Calu3 (cell line): ENCODE measurements at regions of chr1 and their contacts with region 1.

Region 1: GRCh38 chr1:64823691-64824476 is 79.0 kb downstream of the RAVER2 start:
- DNase-seq: peak; percentile 65
- H3K4me3 Mint-ChIP-seq: no peak overlapping the region
- H3K27ac Mint-ChIP-seq: no peak overlapping the region
- H3K4me1 Mint-ChIP-seq: no peaks in the 10 kb centered on the region
- H3K27me3 Mint-ChIP-seq: no peaks in the 10 kb centered on the region
- CTCF ChIP-seq: no peak

Region 2: GRCh38 chr1:64553281-64553680 is 270.6 kb before region 1 on chr1:
- CTCF ChIA-PET with region 1: no interaction called
- intact Hi-C with region 1: loop called (anchors 10 kb)
- DNase-seq: no peak
- H3K4me3 Mint-ChIP-seq: no peak overlapping the region
- H3K27ac Mint-ChIP-seq: no peak overlapping the region
- H3K4me1 Mint-ChIP-seq: no peaks in the 10 kb centered on the region
- H3K27me3 Mint-ChIP-seq: no peaks in the 10 kb centered on the region
- CTCF ChIP-seq: no peak

Region 3: DNA sequence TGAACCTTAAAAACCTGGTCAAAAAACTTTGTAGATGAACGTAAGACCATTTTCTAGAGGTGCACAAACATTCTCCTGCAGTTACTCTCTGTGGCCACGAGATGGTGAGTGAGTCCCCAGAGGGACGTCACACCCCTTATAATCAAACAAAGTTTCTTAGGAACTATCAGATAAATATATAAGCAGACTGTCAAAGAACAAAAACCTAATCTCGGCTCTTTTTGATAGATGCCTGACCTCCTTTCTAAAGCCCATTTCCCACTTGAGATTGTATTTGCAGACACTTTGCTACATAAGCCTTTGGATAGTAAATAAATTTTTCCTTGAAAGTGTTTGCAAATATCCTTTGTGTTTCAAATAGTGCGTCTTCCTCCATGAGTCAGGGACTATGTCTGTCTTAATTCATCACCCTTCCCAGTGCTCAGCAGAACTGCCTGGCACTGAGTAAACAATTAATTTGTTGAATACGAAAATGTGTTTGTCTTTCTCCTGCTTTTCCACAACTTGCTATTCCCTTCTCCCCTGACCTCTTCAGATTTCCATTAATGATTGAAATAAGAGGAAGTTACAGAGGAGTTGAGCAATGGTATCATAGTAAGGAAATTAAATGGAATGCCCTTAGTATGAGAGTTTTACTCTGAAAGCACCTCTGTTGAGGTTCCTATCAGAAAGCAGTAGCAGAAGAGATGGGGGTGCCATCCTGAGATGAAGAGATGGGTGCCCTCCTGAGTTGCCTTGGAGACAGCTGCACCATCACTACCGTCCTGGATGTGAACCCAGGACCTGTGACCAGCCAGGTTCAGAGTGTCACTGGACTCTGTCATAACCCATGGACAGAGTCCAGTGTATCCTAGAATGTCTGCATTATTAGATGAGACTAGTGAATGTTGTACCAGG is 136.8 kb before region 1 on chr1:
- CTCF ChIA-PET with region 1: no interaction called
- intact Hi-C with region 1: loop called (anchors 1 kb)
- DNase-seq: peak; percentile 54
- H3K4me3 Mint-ChIP-seq: peak overlapping the region; percentile 44
- H3K27ac Mint-ChIP-seq: peak overlapping the region; percentile 88
- H3K4me1 Mint-ChIP-seq: peaks cover 40% of the 10 kb centered on the region
- H3K27me3 Mint-ChIP-seq: no peaks in the 10 kb centered on the region
- CTCF ChIP-seq: peak; percentile 76

Region 4: DNA sequence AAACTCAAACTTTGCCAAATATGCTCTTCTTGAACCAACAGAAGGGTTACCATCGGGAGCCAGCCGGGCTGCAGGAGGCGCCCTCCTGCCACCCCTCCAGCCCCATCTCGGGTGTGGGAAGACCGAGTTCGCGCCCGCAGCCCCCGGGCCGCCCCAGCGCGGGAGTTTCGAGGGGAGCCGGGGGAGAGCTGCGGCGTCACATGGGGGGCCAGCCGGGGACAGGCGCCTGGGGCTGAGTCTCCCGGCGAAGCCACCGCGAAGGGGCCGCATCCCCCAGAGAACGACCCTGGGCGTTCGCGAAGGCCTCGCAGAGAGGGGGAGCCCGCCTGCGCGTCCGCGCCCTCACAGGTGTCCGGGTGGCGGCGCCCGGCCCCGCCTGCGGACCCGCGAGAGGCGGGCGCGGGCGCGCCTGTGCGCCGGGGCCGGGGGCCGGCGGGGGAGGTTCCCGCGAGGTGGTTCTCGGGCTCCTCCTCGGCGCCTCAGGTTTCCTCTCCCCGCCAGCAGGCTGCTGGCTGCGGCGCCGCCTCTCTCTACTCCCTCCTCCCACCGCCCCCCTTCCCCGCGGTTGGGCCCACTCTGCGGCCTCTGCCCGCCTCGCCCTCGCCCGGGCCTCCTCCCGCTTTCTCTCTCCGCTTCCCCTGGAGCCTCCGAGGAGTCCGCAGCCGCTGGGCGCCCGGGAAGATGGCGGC is 79.2 kb before region 1 on chr1 and contains the start of gene RAVER2:
- CTCF ChIA-PET with region 1: no interaction called
- intact Hi-C with region 1: loop called (anchors 1 kb)
- DNase-seq: peak; percentile 80
- H3K4me3 Mint-ChIP-seq: peak within 1 kb of the TSS; percentile 94
- H3K27ac Mint-ChIP-seq: peak within 1 kb of the TSS; percentile 49
- H3K4me1 Mint-ChIP-seq: peaks cover 23% of the 10 kb centered on the region
- H3K27me3 Mint-ChIP-seq: no peaks in the 10 kb centered on the region
- CTCF ChIP-seq: peak; percentile 56
- total RNA-seq, gene RAVER2: 10.3 and 12.8 TPM in 2 replicates

Region 5: DNA sequence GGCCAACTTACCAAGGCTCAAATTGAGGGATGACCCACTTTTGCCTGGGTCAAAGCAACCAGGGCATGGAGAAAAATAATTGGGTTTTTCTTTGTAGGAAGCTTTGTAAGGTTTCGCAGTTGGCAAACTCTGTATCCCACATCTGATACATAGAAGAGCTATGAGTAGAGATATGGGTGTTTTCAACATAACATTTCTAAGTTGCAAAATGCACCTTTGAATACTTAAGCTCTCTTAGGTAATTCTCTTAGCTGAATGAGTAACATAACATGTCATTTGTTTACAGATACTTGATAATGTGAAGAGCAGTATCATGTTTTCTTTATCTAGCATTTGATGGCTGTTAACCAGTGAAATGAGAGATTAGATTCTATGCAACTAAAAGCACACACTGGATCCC is 57.5 kb before region 1 on chr1:
- CTCF ChIA-PET with region 1: no interaction called
- intact Hi-C with region 1: no loop called
- DNase-seq: no peak
- H3K4me3 Mint-ChIP-seq: no peak overlapping the region
- H3K27ac Mint-ChIP-seq: peak overlapping the region; percentile 44
- H3K4me1 Mint-ChIP-seq: peaks cover 9% of the 10 kb centered on the region
- H3K27me3 Mint-ChIP-seq: no peaks in the 10 kb centered on the region
- CTCF ChIP-seq: no peak

Region 6: GRCh38 chr1:65388908-65389695 is 565.2 kb after region 1 on chr1:
- CTCF ChIA-PET with region 1: no interaction called
- intact Hi-C with region 1: no loop called
- DNase-seq: no peak
- H3K4me3 Mint-ChIP-seq: no peak overlapping the region
- H3K27ac Mint-ChIP-seq: no peak overlapping the region
- H3K4me1 Mint-ChIP-seq: no peaks in the 10 kb centered on the region
- H3K27me3 Mint-ChIP-seq: no peaks in the 10 kb centered on the region
- CTCF ChIP-seq: no peak